ENCODE measurements at regions of chr2 and their contacts with region 1.

Region 1: GRCh38 chr2:119759451-119760236 is at the start of gene PTPN4:
- DNase-seq: peak; percentile 95
- H3K4me3 Mint-ChIP-seq: peak within 1 kb of the TSS; percentile 90
- H3K27ac Mint-ChIP-seq: peak within 1 kb of the TSS; percentile 94
- H3K4me1 Mint-ChIP-seq: peaks cover 53% of the 10 kb centered on the region
- H3K27me3 Mint-ChIP-seq: peaks cover 3% of the 10 kb centered on the region
- total RNA-seq, gene PTPN4: 24.5 and 28.3 TPM in 2 replicates

Region 2: GRCh38 chr2:118088051-118089024 is 1671.3 kb before region 1 on chr2 and contains the start of gene INSIG2:
- intact Hi-C with region 1: loop called (anchors 2 kb)
- DNase-seq: peak; percentile 92
- H3K4me3 Mint-ChIP-seq: peak within 1 kb of the TSS; percentile 94
- H3K27ac Mint-ChIP-seq: peak within 1 kb of the TSS; percentile 95
- H3K4me1 Mint-ChIP-seq: peaks cover 20% of the 10 kb centered on the region
- H3K27me3 Mint-ChIP-seq: no peaks in the 10 kb centered on the region
- total RNA-seq, gene INSIG2: 31.3 and 34.6 TPM in 2 replicates

Region 3: DNA sequence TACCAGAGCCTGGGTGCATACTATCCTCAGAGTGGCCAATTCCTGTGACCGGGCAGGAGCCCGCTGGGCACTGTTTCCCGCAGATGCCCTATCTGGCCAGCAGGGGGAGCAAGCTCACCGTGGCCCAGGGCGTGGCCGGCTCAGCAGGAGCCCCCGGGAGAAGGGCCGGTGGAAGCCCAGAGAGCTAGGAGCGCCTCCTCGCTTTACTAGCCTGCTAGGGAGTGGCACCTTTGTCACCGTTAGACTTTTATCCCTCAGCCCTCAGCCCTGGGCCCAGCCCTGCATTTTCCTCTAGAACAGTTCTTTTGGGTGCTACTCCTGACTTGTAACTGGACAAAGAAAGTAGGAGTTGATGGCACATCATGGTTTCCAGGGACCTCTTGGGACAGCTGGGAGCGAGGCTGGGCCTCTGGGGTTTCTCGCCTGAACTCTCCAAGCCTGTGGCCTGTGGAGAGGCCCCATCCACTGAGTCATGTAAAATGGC is 56.7 kb before region 1 on chr2:
- intact Hi-C with region 1: loop called (anchors 2 kb)
- DNase-seq: peak; percentile 56
- H3K4me3 Mint-ChIP-seq: no peak overlapping the region
- H3K27ac Mint-ChIP-seq: no peak overlapping the region
- H3K4me1 Mint-ChIP-seq: peaks cover 3% of the 10 kb centered on the region
- H3K27me3 Mint-ChIP-seq: peaks cover 2% of the 10 kb centered on the region

Region 4: DNA sequence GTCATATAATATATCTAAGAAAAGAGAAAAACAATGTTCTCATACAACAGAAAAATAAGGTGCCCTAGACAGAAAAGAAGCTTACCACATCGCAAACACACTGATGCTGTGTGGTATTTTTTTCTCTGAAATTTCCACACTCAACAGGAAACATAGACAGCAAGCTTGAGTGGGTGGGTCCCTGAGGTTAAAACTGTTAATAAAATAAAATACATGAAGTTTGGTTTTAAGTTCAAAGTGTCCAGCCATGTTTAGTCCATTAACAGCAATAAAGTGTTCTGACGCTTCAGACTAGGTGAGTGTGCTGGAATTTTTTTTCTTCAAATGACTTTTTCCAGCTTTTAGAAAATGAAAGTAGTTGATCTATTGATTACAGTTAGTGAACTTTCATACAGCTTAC is 169.9 kb after region 1 on chr2:
- intact Hi-C with region 1: loop called (anchors 2 kb)
- DNase-seq: peak; percentile 34
- H3K4me3 Mint-ChIP-seq: peak overlapping the region; percentile 72
- H3K27ac Mint-ChIP-seq: peak overlapping the region; percentile 88
- H3K4me1 Mint-ChIP-seq: peaks cover 60% of the 10 kb centered on the region
- H3K27me3 Mint-ChIP-seq: no peaks in the 10 kb centered on the region

Region 5: GRCh38 chr2:120223034-120223912 is 463.6 kb after region 1 on chr2 and contains the start of gene TMEM185B:
- intact Hi-C with region 1: loop called (anchors 2 kb)
- DNase-seq: peak; percentile 90
- H3K4me3 Mint-ChIP-seq: peak within 1 kb of the TSS; percentile 86
- H3K27ac Mint-ChIP-seq: peak within 1 kb of the TSS; percentile 92
- H3K4me1 Mint-ChIP-seq: peaks cover 69% of the 10 kb centered on the region
- H3K27me3 Mint-ChIP-seq: peaks cover 2% of the 10 kb centered on the region
- total RNA-seq, gene TMEM185B: 47.9 and 48.6 TPM in 2 replicates

Region 6: DNA sequence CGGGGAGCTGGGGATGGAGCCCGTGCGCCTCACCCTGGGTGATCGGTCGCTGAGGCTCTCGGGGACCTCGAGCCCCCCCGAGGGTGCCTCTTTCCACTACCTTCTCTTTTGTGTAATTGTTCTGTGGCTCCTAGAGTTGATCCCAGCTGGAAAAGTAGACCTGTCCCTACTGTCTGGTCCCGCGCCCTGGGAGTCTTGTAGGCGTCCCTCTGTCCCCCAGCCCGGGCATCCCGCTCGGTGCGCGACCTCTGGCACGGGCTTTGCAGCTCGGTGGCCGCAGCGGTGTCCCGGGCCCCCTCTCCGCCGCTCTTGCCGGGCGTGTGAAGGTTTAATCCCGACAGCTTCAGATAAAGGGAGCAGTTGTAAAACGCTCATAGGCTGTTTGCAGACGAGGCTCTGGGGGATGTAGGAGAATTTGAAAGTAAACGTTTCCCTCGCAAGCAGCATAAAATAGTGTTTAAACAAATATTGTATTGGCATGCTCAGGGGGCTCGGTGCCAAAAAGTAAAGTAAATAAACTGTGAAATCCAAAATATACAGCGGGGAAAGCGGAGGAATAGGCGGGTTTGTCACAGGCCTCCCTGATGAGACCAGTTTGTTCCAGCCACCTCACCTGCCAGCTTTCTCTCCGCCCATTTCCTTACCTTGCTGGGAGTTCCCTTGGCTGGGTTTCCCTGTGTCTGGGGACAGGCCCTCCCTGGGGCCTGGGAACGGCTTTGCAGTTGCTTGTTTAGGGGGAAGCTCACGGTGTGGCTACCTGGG is 977.9 kb after region 1 on chr2:
- intact Hi-C with region 1: no loop called
- DNase-seq: no peak
- H3K4me3 Mint-ChIP-seq: no peak overlapping the region
- H3K27ac Mint-ChIP-seq: no peak overlapping the region
- H3K4me1 Mint-ChIP-seq: peaks cover 10% of the 10 kb centered on the region
- H3K27me3 Mint-ChIP-seq: peaks cover 56% of the 10 kb centered on the region

Measured in activated T-helper 1 cell treated with anti-CD3 and anti-CD28 coated beads, Interleukin-12 subunit alpha, Interleukin-12 subunit beta, Interleukin-2, Interleukin-4 antibody, amounts not matched to agents 30 ng/mL and 10 ng/mL and 1 ng/mL, durations not matched to agents 14 hours and 24 hours and 36 hours (primary cell).